Common myeloid progenitor, CD34-positive (primary cell): ENCODE measurements at regions of chr4 and their contacts with region 1.

Region 1: GRCh38 chr4:173237152-173237551 is 68.5 kb downstream of the GALNT7 start:
- DNase-seq: peak in 1 of 3 donors; percentile 42
- H3K4me3 ChIP-seq: no peak overlapping the region
- H3K27ac ChIP-seq: no peak overlapping the region
- H3K4me1 ChIP-seq: peaks cover 0 to 14% (median 4%) of the 10 kb centered on the region in 4 experiments
- H3K27me3 ChIP-seq: no peaks in the 10 kb centered on the region

Region 2: DNA sequence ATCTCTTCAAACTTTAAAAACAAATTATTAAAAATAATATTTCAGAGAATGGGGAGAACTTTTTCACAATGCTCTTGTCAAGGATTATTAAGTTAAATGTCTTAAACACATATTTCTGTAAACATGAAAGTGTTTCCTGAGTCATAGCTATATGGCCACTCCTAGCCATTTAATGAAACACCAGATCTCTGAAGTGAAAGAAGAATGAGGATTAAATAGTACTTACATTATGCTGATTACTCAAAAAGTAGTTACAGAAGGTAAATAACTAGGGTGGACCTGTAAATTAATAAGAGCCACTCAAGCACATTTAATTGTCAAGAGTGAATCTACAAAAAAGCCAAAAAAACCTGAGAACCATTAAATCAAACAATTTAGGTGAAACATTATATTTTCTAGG is 126.1 kb before region 1 on chr4:
- CTCF ChIA-PET with region 1: no interaction called
- POLR2A ChIA-PET with region 1: no interaction called
- DNase-seq: no peak
- H3K4me3 ChIP-seq: no peak overlapping the region
- H3K27ac ChIP-seq: no peak overlapping the region
- H3K4me1 ChIP-seq: no peaks in the 10 kb centered on the region
- H3K27me3 ChIP-seq: no peaks in the 10 kb centered on the region

Region 3: DNA sequence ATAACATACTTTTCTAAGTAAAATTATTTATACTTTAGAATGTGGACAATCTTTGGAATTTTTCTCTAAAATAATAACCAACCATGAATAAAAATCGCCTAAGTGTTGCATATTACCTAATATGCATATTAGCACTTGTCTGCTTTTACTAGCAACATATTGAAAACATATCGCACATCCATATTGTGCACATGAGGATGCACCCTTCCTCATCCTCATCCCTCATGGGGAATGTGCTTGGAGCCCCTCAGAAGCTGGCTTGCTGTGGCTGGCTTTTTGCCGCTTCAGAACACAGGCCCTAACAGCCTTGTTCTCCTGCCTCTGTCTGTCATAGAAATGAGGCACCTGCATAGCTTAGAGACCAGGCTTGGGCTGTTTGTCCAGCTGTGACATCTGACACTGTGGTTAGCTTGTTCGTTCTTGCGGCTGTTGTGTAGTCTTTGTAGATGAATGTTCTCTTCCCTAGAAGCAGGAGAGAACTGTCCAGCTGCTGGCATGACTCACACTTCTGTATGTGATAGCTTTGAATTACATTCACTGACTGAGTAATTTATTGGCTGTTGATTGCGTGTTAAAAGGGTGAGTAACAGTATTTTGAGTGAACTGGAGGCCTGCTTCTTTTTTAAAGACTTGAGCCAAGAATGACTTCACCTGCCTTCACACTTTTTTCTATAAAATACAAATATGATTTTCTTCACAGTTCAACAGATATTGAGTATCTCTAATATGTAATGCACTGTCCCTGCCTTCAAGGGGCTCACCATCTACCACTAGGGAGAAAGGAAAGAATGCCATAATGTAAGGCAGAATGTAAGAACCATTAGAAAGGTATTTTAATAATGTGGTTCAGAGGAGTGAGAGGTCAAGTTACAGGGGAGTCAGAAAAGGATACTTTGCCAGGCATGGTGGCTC is 15.1 kb after region 1 on chr4:
- CTCF ChIA-PET with region 1: interaction called, 11 read pairs
- POLR2A ChIA-PET with region 1: no interaction called
- DNase-seq: peak; percentile 43 to 96 (median 94)
- H3K4me3 ChIP-seq: no peak overlapping the region
- H3K27ac ChIP-seq: peak overlapping the region in 1 of 2 experiments; percentile 12
- H3K4me1 ChIP-seq: peaks cover 10 to 23% (median 17%) of the 10 kb centered on the region in 4 experiments
- H3K27me3 ChIP-seq: no peaks in the 10 kb centered on the region

Region 4: DNA sequence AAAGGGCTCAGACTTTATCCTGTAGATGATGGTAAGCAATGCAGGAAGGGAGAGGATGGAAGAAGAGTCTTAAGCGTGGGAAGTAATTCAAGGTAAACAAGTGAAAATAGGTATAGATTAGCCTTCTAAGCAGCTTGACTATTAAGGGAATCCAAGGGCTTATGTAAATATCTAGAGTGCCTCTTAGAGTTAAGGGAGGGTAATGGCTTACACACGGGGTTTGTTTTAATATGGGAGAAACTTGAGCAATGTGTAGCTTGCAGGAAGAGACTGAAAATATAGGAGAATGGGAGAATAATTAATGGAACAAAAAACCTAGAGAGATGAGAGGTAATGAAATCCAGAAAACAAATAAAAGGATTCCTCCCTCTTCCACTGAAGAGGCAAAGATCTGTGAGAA is 120.8 kb after region 1 on chr4:
- CTCF ChIA-PET with region 1: no interaction called
- POLR2A ChIA-PET with region 1: no interaction called
- DNase-seq: no peak
- H3K4me3 ChIP-seq: no peak overlapping the region
- H3K27ac ChIP-seq: no peak overlapping the region
- H3K4me1 ChIP-seq: no peaks in the 10 kb centered on the region
- H3K27me3 ChIP-seq: no peaks in the 10 kb centered on the region